A549 (cell line): ENCODE measurements at regions of chr2 and their contacts with region 1.

Region 1: GRCh38 chr2:105567996-105568494 is 169.2 kb upstream of the FHL2 start:
- DNase-seq: no peak
- ATAC-seq: 0 out of 6 replicates have a peak, but pooled peaks of 1 of the 2 experiments have one; percentile 27
- H3K4me3 ChIP-seq: no peak overlapping the region
- H3K27ac ChIP-seq: no peak overlapping the region
- H3K4me1 ChIP-seq: no peaks in the 10 kb centered on the region
- CTCF ChIP-seq: no peak
- EP300 ChIP-seq: no peak
- POLR2A ChIP-seq: no peak
- RAD21 ChIP-seq: no peak

Region 2: DNA sequence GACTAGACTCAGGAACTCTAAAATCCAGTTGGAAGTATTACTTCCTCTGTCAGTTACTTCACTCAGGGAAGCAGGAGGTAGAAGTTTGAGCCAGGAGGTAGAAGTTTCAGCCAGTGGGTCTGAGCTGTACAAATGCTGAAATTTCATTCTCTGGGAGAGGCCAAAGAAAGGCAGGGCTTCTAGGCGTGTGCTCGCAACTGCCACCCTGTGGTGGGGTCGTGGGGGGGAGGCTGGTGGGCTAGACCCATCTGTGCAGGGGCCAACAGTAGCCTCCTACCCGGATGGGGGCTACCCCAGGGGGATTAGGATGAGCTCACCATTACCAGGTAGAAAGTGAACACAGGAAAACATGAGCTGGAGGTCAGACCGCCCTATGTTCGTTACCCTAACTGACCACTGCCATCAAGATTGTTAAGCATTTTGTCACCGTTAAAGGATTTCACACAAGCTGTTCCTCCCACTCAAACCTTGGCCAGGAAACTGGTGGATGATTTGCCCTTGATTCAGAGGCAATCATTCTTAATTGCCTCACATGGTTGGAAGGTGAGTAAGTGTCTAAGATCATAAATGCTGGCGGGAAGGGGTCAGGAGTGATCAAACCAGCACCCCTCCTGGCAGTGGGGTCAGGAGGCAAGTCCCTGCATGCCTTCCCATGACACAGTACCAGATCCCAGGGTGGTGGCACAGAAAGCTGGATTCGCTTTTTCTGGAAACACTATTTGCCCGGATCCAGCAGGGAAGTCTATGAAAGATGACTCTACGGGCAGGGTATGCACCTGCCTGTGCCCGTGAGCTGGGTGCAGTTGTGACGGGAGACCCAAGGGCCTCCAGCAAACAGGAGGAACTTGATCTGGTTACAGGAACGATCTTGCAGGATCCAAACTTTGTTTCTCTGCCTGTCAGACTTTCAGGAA is 164.0 kb before region 1 on chr2:
- CTCF ChIA-PET with region 1: no interaction called
- POLR2A ChIA-PET with region 1: no interaction called
- DNase-seq: peak; percentile 36 to 67
- ATAC-seq: peak; percentile 69 to 71
- H3K4me3 ChIP-seq: no peak overlapping the region
- H3K27ac ChIP-seq: peak overlapping the region; percentile 55 to 84
- H3K4me1 ChIP-seq: peaks cover 28% of the 10 kb centered on the region
- CTCF ChIP-seq: peak; percentile 37
- EP300 ChIP-seq: 0 out of 5 replicates have a peak, but pooled peaks of 1 of the 2 experiments have one; percentile 17
- POLR2A ChIP-seq: no peak
- RAD21 ChIP-seq: peak; percentile 8 to 39; a peak in 2 of 5 replicates

Region 3: DNA sequence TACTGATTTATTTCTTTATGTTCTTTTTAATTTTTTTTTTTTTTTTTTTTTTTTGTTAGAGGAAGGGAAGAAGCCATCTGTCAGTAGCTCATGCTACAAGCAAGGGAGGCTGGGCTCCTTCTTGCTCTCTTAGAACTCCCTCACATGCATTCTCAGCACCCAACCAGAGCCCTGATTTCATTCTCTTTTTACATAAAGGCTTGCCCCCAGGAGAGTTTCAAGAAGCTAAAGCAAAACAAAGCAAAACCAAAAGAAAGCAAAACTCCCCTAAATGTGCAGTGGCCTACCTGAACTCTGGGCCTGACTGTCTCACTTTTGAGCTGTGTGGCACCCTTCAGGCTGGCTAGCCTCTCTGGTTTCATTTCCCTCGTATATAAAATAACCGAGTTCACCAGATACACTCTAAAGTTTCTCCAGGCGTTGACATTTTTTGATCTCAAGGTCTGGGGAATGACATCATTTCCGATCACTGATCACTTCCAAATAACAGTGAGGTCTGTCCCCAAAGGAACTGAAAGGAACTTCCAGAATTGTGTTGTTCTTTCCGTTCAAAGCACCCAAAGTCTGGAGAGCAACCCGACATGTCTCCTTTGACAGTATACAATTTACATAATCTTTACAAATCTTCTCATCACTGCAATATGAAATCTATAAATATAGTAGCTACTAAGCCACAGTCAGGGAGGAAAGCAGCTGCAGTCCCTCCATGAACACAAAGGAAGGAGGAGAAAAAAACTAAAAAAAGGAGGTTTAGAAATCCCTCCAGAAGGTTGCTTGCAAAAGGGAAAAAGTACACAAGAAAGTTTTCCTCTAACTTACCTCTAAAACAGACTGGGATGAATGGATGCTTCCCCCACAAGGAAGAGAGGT is 31.0 kb after region 1 on chr2:
- CTCF ChIA-PET with region 1: no interaction called
- POLR2A ChIA-PET with region 1: interaction called, 10 read pairs
- DNase-seq: no peak
- ATAC-seq: no peak
- H3K4me3 ChIP-seq: no peak overlapping the region
- H3K27ac ChIP-seq: no peak overlapping the region
- H3K4me1 ChIP-seq: no peaks in the 10 kb centered on the region
- CTCF ChIP-seq: no peak
- EP300 ChIP-seq: no peak
- POLR2A ChIP-seq: no peak
- RAD21 ChIP-seq: no peak